Gastrocnemius medialis (tissue), 4 donors: ENCODE measurements at regions of chr19 and their contacts with region 1.

Region 1: DNA sequence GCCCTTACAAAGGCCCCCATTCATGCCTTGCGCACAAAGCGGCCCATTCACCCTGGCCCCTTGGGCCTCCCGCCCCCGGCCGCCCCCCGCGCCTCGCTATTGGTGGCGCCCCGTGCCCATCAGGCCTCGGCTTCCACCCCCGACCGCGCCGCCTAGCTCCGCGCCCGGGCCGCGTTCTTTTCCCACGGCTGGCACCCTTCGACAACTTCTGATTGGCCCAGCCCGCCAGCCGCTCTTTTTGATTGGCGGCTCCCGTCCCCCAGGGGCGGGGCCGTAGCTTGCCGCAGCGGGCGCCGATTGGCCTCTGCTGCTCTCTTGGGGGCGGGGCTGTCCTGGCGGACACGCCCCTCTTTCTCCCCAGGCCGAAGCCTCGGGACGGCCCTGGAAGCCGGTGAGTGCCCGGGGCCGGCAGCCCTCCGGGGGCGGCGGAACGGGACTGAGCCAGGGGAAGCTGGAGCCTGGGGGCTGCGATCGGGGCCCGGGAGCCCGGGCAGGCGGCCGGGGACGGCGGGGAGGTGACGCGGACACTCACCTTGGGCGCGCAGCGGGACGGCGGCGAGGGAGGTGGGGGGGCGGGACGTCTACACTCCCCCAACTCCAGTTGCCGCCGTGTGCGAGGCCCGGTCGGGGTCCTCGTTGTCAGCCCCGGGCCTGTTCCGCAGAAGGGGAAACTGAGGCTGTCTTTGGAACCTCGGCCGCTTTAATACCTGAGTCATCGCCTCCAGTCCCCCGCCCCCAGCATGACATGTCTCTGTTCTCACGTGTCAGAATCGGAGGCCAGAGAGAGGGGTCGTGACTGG is at the start of gene MYH14:
- DNase-seq: peak; percentile 91 to 96
- ATAC-seq: peak; percentile 71 to 82
- H3K4me3 ChIP-seq: peak within 1 kb of the TSS; percentile 70 to 95 (median 75)
- H3K27ac ChIP-seq: peak within 1 kb of the TSS; percentile 95 to 99 (median 98)
- H3K4me1 ChIP-seq: peaks cover 33 to 35% of the 10 kb centered on the region in 2 donors
- H3K27me3 ChIP-seq: no peaks in the 10 kb centered on the region
- CTCF ChIP-seq: no peak
- POLR2A ChIP-seq: peak; percentile 93 to 94
- total RNA-seq, gene MYH14: 103 to 174 (median 141) TPM

Region 2: GRCh38 chr19:48637170-48637947 is 1566.1 kb before region 1 on chr19 and contains the start of gene DBP:
- in situ Hi-C with region 1: no loop called
- intact Hi-C with region 1: loop called (anchors 5 kb)
- DNase-seq: peak; percentile 99 to 100
- ATAC-seq: peak; percentile 52 to 55
- H3K4me3 ChIP-seq: peak within 1 kb of the TSS; percentile 58 to 95 (median 76)
- H3K27ac ChIP-seq: peak within 1 kb of the TSS; percentile 97 to 100 (median 100)
- H3K4me1 ChIP-seq: peaks cover 37 to 46% of the 10 kb centered on the region in 2 donors
- H3K27me3 ChIP-seq: no peaks in the 10 kb centered on the region
- CTCF ChIP-seq: peak in 1 of 5 experiments; percentile 21
- POLR2A ChIP-seq: peak; percentile 59 to 76
- total RNA-seq, gene DBP: 1.7 to 12.9 (median 4.4) TPM

Region 3: GRCh38 chr19:49590071-49590970 is 613.2 kb before region 1 on chr19:
- in situ Hi-C with region 1: no loop called
- intact Hi-C with region 1: loop called (anchors 5 kb)
- DNase-seq: peak; percentile 84 to 95
- ATAC-seq: peak; percentile 68 to 74
- H3K4me3 ChIP-seq: peak overlapping the region; percentile 62 to 82 (median 70)
- H3K27ac ChIP-seq: peak overlapping the region; percentile 86 to 95 (median 94)
- H3K4me1 ChIP-seq: peaks cover 14 to 15% of the 10 kb centered on the region in 2 donors
- H3K27me3 ChIP-seq: no peaks in the 10 kb centered on the region
- CTCF ChIP-seq: no peak
- POLR2A ChIP-seq: peak; percentile 65 to 72

Region 4: GRCh38 chr19:50214761-50215575 is 11.5 kb after region 1 on chr19:
- in situ Hi-C with region 1: no loop called
- intact Hi-C with region 1: no loop called
- DNase-seq: peak in 1 of 2 donors; percentile 61
- ATAC-seq: peak; percentile 9 to 63
- H3K4me3 ChIP-seq: no peak overlapping the region
- H3K27ac ChIP-seq: peak overlapping the region; percentile 44 to 79 (median 63)
- H3K4me1 ChIP-seq: peaks cover 0 to 7% of the 10 kb centered on the region in 2 donors
- H3K27me3 ChIP-seq: no peaks in the 10 kb centered on the region
- CTCF ChIP-seq: no peak
- POLR2A ChIP-seq: no peak

Region 5: DNA sequence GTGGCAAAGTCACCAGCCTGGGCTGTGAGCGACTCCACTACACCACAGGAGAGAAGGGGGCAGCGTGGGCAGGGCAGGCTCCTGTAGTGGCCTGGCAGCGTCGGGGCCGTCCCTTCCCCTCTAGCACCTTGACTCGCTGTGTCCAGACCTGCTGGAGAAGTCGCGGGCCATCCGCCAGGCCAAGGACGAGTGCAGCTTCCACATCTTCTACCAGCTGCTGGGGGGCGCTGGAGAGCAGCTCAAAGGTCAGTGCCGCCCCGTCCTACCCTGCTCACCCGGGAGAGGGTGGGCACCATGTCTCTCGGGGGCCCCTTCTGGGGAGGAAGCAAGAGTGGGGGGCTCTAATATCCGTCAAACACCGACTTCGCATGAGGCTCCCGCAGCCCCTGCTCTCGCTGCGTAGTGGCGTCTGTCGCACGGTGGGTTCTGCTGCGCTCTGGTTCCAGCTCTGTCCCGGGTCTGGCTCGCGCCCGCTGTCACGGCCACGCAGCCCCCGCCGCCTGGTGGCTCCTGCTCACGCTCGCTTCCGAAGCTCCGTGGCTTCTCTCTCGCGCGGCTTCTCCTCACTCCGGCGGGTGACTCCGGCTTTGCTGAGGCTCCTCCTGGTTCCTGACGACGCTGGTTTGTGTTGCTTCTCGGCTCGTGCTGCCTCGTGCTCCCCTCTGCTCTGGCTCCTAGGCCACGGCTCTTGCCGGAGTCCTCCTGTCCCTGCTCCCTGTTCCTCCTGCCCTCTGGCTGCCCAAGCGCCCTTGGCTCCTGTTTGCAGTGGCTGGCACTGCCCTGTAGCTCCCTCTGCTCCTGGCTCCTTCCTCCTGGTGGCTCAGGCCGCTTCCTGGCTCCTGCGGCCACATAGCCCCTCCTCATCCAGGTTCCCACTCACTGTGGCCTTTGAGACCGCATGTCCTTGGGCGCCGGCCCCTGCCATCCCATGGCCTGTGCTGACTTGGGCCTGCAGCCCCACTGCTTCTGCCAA is 27.2 kb after region 1 on chr19:
- in situ Hi-C with region 1: no loop called
- intact Hi-C with region 1: loop called (anchors 1 kb)
- DNase-seq: peak in 1 of 2 donors; percentile 38
- ATAC-seq: no peak
- H3K4me3 ChIP-seq: no peak overlapping the region
- H3K27ac ChIP-seq: peak overlapping the region; percentile 17 to 91 (median 57)
- H3K4me1 ChIP-seq: peaks cover 14 to 20% of the 10 kb centered on the region in 2 donors
- H3K27me3 ChIP-seq: no peaks in the 10 kb centered on the region
- CTCF ChIP-seq: no peak
- POLR2A ChIP-seq: no peak

Region 6: DNA sequence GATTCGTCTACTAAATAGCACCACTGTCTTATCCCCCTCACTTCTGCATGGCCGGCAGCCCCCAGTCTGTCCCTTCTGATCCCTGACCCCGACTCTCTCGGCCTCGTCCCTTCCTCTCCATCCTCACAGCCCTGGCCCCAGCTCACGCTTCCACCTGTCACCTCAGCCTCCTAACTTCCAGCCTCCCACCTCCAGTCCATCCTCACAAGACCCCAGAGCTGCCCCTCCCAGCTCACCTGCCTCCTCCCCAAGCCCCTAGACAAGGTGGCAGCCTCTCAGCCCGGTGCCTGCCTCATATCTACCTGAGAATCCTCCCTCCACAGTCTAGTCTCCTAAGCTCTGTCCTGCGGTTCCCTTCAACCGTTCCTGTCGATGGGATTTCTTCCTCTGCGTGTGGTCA is 115.7 kb after region 1 on chr19:
- in situ Hi-C with region 1: no loop called
- intact Hi-C with region 1: no loop called
- DNase-seq: no peak
- ATAC-seq: no peak
- H3K4me3 ChIP-seq: no peak overlapping the region
- H3K27ac ChIP-seq: no peak overlapping the region
- H3K4me1 ChIP-seq: no peaks in the 10 kb centered on the region
- H3K27me3 ChIP-seq: peaks cover 22 to 25% (median 24%) of the 10 kb centered on the region in 3 donors
- CTCF ChIP-seq: no peak
- POLR2A ChIP-seq: no peak

Region 7: DNA sequence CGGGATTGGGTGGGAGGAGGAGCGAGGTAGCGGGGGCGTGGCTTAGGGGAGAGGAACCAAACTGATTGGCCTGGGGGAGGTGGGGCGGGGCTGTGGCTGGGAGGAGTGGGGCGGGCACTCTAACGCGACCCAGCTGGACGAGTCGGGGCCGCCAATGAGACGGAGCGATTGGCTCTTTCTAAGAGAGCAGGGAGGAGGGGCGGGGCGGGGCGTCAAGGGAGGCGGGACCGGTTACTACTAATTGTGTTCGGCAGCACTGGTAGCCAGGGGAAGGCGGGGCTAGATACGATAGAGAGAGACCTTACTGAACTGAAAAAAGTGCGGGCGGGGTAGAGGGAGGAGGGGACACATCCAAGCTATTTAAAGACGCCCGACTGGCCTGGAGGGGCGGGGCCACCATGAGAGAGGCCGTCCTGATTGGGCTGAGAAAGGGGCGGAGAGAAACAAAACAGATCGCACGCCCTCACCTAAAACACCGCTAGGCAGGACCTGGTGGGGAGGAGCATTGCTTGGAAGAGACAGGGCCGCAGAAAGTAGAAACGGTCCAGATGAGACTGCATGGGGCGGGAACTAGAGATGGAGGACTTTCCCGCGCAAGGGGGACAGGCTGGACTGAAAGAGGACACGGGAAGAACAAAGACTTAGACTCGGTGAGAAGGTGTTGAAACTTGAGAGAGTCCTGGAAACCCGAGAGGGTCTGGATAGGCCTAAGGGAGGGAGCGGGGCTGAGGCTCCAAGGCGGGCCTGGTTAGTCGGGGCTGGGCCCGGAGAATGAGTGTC is 125.9 kb after region 1 on chr19 and contains the start of gene KCNC3:
- in situ Hi-C with region 1: no loop called
- intact Hi-C with region 1: loop called (anchors 2 kb)
- DNase-seq: peak; percentile 100
- ATAC-seq: peak; percentile 77 to 78
- H3K4me3 ChIP-seq: peak within 1 kb of the TSS; percentile 52 to 61 (median 55)
- H3K27ac ChIP-seq: peak within 1 kb of the TSS; percentile 79 to 94 (median 90)
- H3K4me1 ChIP-seq: peaks cover 38 to 45% of the 10 kb centered on the region in 2 donors
- H3K27me3 ChIP-seq: peaks cover 18 to 29% (median 23%) of the 10 kb centered on the region in 3 donors
- CTCF ChIP-seq: no peak
- POLR2A ChIP-seq: peak; percentile 86
- total RNA-seq, gene KCNC3: 0.25 to 1.4 (median 0.53) TPM

Region 8: GRCh38 chr19:50486823-50487511 is 283.5 kb after region 1 on chr19:
- in situ Hi-C with region 1: no loop called
- intact Hi-C with region 1: loop called (anchors 10 kb)
- DNase-seq: peak in 1 of 2 donors; percentile 76
- ATAC-seq: peak in 1 of 2 donors; percentile 36
- H3K4me3 ChIP-seq: no peak overlapping the region
- H3K27ac ChIP-seq: peak overlapping the region in 3 of 4 donors; percentile 20 to 85 (median 28)
- H3K4me1 ChIP-seq: peaks cover 10 to 13% of the 10 kb centered on the region in 2 donors
- H3K27me3 ChIP-seq: no peaks in the 10 kb centered on the region
- CTCF ChIP-seq: peak; percentile 19 to 68 (median 60)
- POLR2A ChIP-seq: no peak

Region 9: GRCh38 chr19:50649433-50650391 is 446.2 kb after region 1 on chr19 and contains the start of gene C19orf81:
- in situ Hi-C with region 1: no loop called
- intact Hi-C with region 1: no loop called
- DNase-seq: no peak
- ATAC-seq: no peak
- H3K4me3 ChIP-seq: no peak within 1 kb of the TSS
- H3K27ac ChIP-seq: no peak within 1 kb of the TSS
- H3K4me1 ChIP-seq: no peaks in the 10 kb centered on the region
- H3K27me3 ChIP-seq: peaks cover 1 to 6% (median 2%) of the 10 kb centered on the region in 3 donors
- CTCF ChIP-seq: no peak
- POLR2A ChIP-seq: no peak
- total RNA-seq, gene C19orf81: not detected